Naive thymus-derived CD4-positive, alpha-beta T cell (primary cell): ENCODE measurements at regions of chr6 and their contacts with region 1.

Region 1: DNA sequence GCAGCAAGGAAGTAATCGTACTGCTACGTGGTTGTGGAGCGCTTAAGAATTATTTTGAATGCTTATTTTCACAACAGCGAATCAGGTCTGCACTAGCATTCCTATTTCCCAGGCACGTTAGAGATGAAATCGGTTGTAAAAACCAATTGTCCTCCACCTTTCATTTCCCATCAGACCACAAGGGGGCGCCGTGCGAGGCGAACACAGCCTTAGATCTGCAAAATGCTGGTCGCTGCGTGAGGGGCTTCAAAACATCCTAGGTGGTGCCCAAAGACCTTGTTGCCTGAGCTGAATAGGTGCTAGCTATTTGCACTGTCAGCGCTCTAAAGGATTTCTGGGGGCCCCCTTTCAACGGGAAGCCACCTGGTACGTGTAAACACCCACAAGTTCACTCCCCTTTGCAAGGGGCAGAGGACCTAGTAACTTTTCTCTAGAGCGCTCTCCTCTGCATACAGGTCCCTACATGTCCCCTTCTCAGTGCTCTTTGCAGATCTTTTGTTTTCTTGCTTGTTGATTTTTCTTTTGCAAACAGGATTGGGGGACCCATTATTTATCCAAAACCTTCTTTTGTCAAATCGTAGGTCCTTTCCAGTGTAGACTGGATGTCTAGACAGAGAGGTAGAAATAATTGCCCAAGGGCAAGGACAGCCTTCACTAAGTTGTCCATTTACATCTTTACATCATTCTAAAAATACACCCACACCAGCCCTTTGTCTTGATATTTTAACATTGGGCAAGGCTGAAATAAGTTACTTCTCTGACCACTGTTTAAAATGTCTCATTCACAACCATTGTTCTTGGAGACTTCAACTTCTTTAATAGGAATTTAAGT is 59.8 kb downstream of the NEDD9 start:
- DNase-seq: peak; percentile 45 to 82 (median 68)
- ATAC-seq: peak; percentile 79
- H3K4me3 ChIP-seq: peak overlapping the region; percentile 25
- H3K4me3 Mint-ChIP-seq: peak overlapping the region in 8 of 10 donors; percentile 6 to 64 (median 53)
- H3K27ac ChIP-seq: no peak overlapping the region
- H3K27ac Mint-ChIP-seq: peak overlapping the region in 2 of 9 donors; percentile 12 to 16
- H3K4me1 ChIP-seq: peaks cover 6 to 10% of the 10 kb centered on the region in 2 donors
- H3K4me1 Mint-ChIP-seq: peaks cover 2 to 14% (median 10%) of the 10 kb centered on the region in 7 donors
- H3K27me3 ChIP-seq: no peaks in the 10 kb centered on the region
- H3K27me3 Mint-ChIP-seq: no peaks in the 10 kb centered on the region

Region 2: GRCh38 chr6:11144393-11144851 is 28.3 kb before region 1 on chr6:
- CTCF ChIA-PET with region 1: interaction called, 5 read pairs
- POLR2A ChIA-PET with region 1: no interaction called
- intact Hi-C with region 1: loop called (anchors 1 kb)
- DNase-seq: peak; percentile 21 to 71 (median 54)
- ATAC-seq: peak; percentile 86
- H3K4me3 ChIP-seq: no peak overlapping the region
- H3K4me3 Mint-ChIP-seq: no peak overlapping the region
- H3K27ac ChIP-seq: no peak overlapping the region
- H3K27ac Mint-ChIP-seq: no peak overlapping the region
- H3K4me1 ChIP-seq: no peaks in the 10 kb centered on the region
- H3K4me1 Mint-ChIP-seq: peaks cover 0 to 7% (median 0%) of the 10 kb centered on the region in 7 donors
- H3K27me3 ChIP-seq: no peaks in the 10 kb centered on the region
- H3K27me3 Mint-ChIP-seq: peaks cover 0 to 5% (median 0%) of the 10 kb centered on the region in 5 donors

Region 3: DNA sequence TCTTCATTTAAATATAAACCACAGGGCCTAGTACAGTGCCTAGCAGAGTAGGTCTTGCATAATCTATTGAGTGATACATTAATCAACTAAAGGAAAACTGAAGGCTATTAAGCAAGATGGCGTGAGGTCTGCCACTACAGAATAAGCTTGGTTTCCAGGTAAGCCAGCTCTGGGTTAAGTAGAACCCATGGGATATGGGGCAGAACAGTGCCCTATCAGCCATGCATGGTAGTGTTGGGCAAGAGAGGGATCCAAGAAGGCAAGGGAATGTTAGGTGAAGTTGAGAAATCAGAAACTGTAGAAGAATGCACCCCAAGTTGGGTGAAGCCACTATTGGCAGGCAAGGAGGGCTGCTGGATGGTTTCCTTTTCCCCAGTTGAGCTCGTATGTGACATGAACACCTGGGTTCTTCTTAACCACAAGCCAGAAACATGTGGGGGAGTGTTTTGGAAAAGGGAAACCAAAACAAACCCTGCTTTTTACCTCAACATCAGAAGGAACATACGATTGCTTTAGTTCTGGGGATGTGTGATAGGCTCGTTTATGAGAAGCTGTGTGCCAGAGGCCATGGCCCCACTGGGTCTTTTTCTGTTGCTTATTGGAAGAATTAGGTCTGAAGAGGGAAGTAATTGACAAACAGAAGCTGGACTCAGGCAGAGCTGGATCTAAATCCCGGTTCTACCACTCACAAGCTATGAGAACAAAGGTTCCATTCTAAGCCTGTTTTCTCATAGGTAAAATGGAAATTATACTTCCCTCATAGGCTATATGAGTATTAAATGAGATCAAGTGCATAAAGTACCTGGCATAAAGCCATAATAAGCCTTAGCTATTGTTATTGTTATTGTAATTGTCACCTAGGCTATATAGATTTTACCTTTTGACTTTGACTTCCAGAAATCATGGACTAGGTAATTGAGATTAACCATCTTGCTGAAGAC is 26.2 kb after region 1 on chr6:
- CTCF ChIA-PET with region 1: no interaction called
- POLR2A ChIA-PET with region 1: no interaction called
- intact Hi-C with region 1: loop called in 1 of 2 experiments (anchors 1 kb)
- DNase-seq: peak in 8 of 9 donors; percentile 23 to 73 (median 58)
- ATAC-seq: peak; percentile 77
- H3K4me3 ChIP-seq: no peak overlapping the region
- H3K4me3 Mint-ChIP-seq: peak overlapping the region; percentile 19 to 61 (median 52)
- H3K27ac ChIP-seq: peak overlapping the region; percentile 6
- H3K27ac Mint-ChIP-seq: peak overlapping the region; percentile 57 to 90 (median 73)
- H3K4me1 ChIP-seq: peaks cover 11 to 44% of the 10 kb centered on the region in 2 donors
- H3K4me1 Mint-ChIP-seq: peaks cover 36 to 81% (median 62%) of the 10 kb centered on the region in 7 donors
- H3K27me3 ChIP-seq: no peaks in the 10 kb centered on the region
- H3K27me3 Mint-ChIP-seq: no peaks in the 10 kb centered on the region

Region 4: GRCh38 chr6:11224252-11224965 is 51.7 kb after region 1 on chr6:
- CTCF ChIA-PET with region 1: no interaction called
- POLR2A ChIA-PET with region 1: no interaction called
- intact Hi-C with region 1: loop called in 1 of 2 experiments (anchors 2 kb)
- DNase-seq: peak in 6 of 9 donors; percentile 4 to 51 (median 34)
- ATAC-seq: peak; percentile 75
- H3K4me3 ChIP-seq: peak overlapping the region; percentile 20
- H3K4me3 Mint-ChIP-seq: peak overlapping the region; percentile 26 to 87 (median 62)
- H3K27ac ChIP-seq: no peak overlapping the region
- H3K27ac Mint-ChIP-seq: peak overlapping the region in 7 of 9 donors; percentile 15 to 93 (median 56)
- H3K4me1 ChIP-seq: peaks cover 8 to 37% of the 10 kb centered on the region in 2 donors
- H3K4me1 Mint-ChIP-seq: peaks cover 27 to 84% (median 38%) of the 10 kb centered on the region in 7 donors
- H3K27me3 ChIP-seq: no peaks in the 10 kb centered on the region
- H3K27me3 Mint-ChIP-seq: no peaks in the 10 kb centered on the region

Region 5: DNA sequence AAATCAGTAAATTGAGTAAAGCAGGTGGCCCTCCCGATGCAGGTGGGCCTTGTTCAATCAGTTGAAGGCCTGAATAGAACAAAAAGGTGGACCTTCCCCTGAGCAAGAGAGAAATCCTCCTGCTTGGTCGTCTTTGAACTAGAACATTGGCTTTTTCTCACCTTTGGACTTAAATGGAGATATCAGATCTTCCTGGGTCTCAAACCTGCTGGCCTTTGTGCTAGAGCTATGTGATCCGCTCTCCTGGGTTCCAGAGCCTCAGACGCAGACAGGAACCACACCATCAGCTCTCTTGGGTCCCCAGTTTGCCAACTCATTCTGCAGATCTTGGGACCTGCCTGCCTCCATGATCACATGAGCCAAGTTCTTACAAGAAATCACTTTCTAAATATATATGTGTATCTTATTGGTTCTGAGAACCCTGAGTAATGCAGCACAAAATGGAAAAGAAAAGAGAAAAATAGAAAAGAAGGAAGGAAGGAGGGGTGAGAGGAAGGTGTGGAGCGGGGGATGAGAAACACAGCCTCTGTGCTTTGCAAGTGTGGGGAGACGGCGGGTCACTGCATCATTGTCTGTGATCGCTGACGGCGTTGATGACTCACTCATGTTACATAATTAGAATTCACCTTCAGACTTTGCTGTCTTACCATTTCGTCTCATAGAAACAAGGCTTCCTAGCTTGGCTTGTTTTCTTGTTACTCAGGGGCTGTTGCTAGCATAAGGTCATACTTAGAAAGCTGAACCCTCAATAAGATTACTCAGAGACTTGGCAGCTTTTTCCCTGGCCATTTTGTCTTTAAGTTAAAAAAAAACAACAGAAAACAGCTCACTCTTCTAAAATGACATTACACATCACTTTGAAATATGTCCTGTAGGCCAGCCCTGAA is 145.4 kb after region 1 on chr6:
- CTCF ChIA-PET with region 1: no interaction called
- POLR2A ChIA-PET with region 1: no interaction called
- intact Hi-C with region 1: loop called in 1 of 2 experiments (anchors 2 kb)
- DNase-seq: peak in 6 of 9 donors; percentile 2 to 53 (median 14)
- ATAC-seq: peak; percentile 90
- H3K4me3 ChIP-seq: no peak overlapping the region
- H3K4me3 Mint-ChIP-seq: peak overlapping the region in 1 of 10 donors; percentile 8
- H3K27ac ChIP-seq: no peak overlapping the region
- H3K27ac Mint-ChIP-seq: peak overlapping the region in 6 of 9 donors; percentile 8 to 62 (median 31)
- H3K4me1 ChIP-seq: peaks cover 0 to 10% of the 10 kb centered on the region in 2 donors
- H3K4me1 Mint-ChIP-seq: peaks cover 13 to 51% (median 30%) of the 10 kb centered on the region in 7 donors
- H3K27me3 ChIP-seq: no peaks in the 10 kb centered on the region
- H3K27me3 Mint-ChIP-seq: no peaks in the 10 kb centered on the region

Region 6: DNA sequence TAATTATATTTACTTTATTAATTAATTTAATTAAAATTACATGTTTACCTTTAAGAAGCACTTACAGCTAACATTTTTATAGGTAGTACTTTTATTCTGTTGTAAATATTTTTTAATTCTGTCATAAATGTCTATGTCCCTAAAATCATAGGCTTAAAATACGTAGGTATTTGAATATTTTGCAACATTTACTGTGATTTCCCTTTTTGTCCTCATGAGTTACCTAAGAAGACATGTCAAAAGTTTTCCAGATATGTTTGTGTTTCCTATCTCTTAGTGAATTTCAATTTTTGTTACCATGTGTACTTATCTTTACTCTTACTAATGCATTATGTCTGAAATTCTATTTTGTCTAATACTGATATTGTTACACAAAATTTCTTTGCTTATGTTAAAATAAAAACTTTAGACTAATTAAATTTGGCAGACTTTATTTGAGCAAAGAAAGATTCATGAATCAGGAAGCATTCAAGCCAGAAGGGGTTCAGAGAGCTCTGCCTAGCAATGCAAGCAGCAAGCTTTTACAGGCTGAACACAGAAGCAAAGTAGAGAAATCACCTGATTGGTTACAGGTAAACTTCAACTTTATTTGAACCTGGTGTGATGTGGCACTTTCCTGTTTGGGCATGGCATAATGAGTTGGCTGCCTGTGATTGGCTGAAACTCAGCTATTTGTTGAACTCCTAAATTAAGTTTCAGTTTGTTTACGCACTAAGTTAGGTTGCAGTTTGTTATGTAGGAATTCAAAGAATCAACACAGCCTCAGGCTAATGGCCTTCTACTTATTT is 241.7 kb after region 1 on chr6:
- CTCF ChIA-PET with region 1: no interaction called
- POLR2A ChIA-PET with region 1: no interaction called
- intact Hi-C with region 1: loop called in 1 of 2 experiments (anchors 2 kb)
- DNase-seq: peak in 6 of 9 donors; percentile 11 to 30 (median 18)
- ATAC-seq: peak; percentile 77
- H3K4me3 ChIP-seq: no peak overlapping the region
- H3K4me3 Mint-ChIP-seq: no peak overlapping the region
- H3K27ac ChIP-seq: no peak overlapping the region
- H3K27ac Mint-ChIP-seq: peak overlapping the region in 1 of 9 donors; percentile 10
- H3K4me1 ChIP-seq: peaks cover 0 to 4% of the 10 kb centered on the region in 2 donors
- H3K4me1 Mint-ChIP-seq: peaks cover 6 to 45% (median 10%) of the 10 kb centered on the region in 7 donors
- H3K27me3 ChIP-seq: no peaks in the 10 kb centered on the region
- H3K27me3 Mint-ChIP-seq: no peaks in the 10 kb centered on the region

Region 7: DNA sequence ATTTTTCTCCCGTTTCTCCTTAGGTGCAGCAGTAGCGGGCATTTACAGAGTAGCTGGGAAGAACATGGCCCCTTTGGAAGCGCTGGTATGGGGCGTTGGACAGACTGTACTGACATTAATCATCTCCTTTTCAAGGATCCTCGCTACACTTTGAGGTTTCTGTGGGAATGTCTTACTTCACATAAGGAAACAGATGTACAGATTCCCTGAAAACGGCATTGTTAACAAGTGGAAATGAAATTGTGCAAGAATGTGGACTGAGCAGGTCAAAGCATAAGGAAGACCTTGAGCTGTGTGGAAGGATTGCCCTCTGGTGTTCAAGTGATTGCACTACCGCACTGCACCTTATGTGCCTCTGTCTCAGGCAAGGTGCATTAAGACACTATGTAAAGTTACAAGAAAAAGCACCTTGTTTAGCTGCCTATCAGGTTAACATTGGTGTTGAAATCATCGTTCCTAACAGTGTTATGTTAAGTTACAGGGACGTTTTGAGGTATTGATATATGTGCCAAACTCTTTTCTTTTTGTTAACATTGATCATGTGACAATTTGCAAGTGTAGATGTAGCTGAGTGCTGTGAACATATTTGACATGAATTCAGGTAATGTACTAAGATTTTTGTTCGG is 402.8 kb after region 1 on chr6:
- CTCF ChIA-PET with region 1: interaction called, 3 read pairs
- POLR2A ChIA-PET with region 1: no interaction called
- intact Hi-C with region 1: loop called in 1 of 2 experiments (anchors 1 kb)
- DNase-seq: peak; percentile 10 to 54 (median 42)
- ATAC-seq: peak; percentile 97
- H3K4me3 ChIP-seq: no peak overlapping the region
- H3K4me3 Mint-ChIP-seq: no peak overlapping the region
- H3K27ac ChIP-seq: no peak overlapping the region
- H3K27ac Mint-ChIP-seq: no peak overlapping the region
- H3K4me1 ChIP-seq: no peaks in the 10 kb centered on the region
- H3K4me1 Mint-ChIP-seq: peaks cover 0 to 4% (median 0%) of the 10 kb centered on the region in 7 donors
- H3K27me3 ChIP-seq: no peaks in the 10 kb centered on the region
- H3K27me3 Mint-ChIP-seq: no peaks in the 10 kb centered on the region

Region 8: GRCh38 chr6:11824986-11825385 is 652.3 kb after region 1 on chr6:
- CTCF ChIA-PET with region 1: no interaction called
- POLR2A ChIA-PET with region 1: no interaction called
- intact Hi-C with region 1: no loop called
- DNase-seq: peak in 1 of 9 donors; percentile 29
- ATAC-seq: peak; percentile 47
- H3K4me3 ChIP-seq: no peak overlapping the region
- H3K4me3 Mint-ChIP-seq: no peak overlapping the region
- H3K27ac ChIP-seq: no peak overlapping the region
- H3K27ac Mint-ChIP-seq: peak overlapping the region in 1 of 9 donors; percentile 65
- H3K4me1 ChIP-seq: no peaks in the 10 kb centered on the region
- H3K4me1 Mint-ChIP-seq: peaks cover 2 to 10% (median 7%) of the 10 kb centered on the region in 7 donors
- H3K27me3 ChIP-seq: no peaks in the 10 kb centered on the region
- H3K27me3 Mint-ChIP-seq: no peaks in the 10 kb centered on the region